T-cell (primary cell): ENCODE measurements at regions of chr7 and their contacts with region 1.

Region 1: DNA sequence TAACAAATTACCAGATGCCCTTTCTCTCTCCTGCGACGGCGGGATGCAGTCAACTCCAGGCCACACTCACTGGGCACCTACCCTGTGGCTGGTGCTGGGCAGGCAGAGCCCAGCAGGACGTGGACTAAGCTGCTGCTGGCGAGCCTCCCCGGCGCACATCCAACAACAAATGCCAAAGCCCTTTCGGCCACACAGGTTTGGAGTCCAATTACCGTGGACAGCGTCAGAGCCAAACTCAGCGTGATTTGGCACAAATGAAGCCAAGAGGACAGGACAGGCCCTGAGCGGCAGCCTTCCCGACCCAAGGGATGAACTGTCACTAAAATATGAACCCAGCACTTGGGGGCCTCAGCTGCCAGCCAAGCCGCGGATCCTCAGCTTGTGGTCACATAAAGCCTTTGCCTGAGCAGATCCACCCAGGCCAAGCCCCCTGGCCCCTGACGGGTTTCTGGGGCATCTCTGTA is 28.4 kb downstream of the DAGLB start:
- DNase-seq: no peak
- ATAC-seq: no peak
- H3K4me3 ChIP-seq: no peak overlapping the region
- H3K4me3 Mint-ChIP-seq: no peak overlapping the region
- H3K27ac ChIP-seq: no peak overlapping the region
- H3K27ac Mint-ChIP-seq: no peak overlapping the region
- H3K4me1 ChIP-seq: peaks cover 0 to 11% of the 10 kb centered on the region in 2 experiments
- H3K4me1 Mint-ChIP-seq: peaks cover 0 to 11% (median 4%) of the 10 kb centered on the region in 3 donors
- H3K27me3 ChIP-seq: no peaks in the 10 kb centered on the region
- H3K27me3 Mint-ChIP-seq: no peaks in the 10 kb centered on the region

Region 2: GRCh38 chr7:4919969-4920766 is 1499.2 kb before region 1 on chr7:
- CTCF ChIA-PET with region 1: no interaction called
- POLR2A ChIA-PET with region 1: interaction called in 1 of 2 experiments, 13 read pairs
- DNase-seq: no peak
- ATAC-seq: no peak
- H3K4me3 ChIP-seq: no peak overlapping the region
- H3K4me3 Mint-ChIP-seq: no peak overlapping the region
- H3K27ac ChIP-seq: no peak overlapping the region
- H3K27ac Mint-ChIP-seq: no peak overlapping the region
- H3K4me1 ChIP-seq: no peaks in the 10 kb centered on the region
- H3K4me1 Mint-ChIP-seq: no peaks in the 10 kb centered on the region
- H3K27me3 ChIP-seq: peaks cover 0 to 32% of the 10 kb centered on the region in 2 experiments
- H3K27me3 Mint-ChIP-seq: peaks cover 0 to 4% of the 10 kb centered on the region in 2 donors